Caco-2 (cell line): ENCODE measurements at regions of chr2 and their contacts with region 1.

Region 1: DNA sequence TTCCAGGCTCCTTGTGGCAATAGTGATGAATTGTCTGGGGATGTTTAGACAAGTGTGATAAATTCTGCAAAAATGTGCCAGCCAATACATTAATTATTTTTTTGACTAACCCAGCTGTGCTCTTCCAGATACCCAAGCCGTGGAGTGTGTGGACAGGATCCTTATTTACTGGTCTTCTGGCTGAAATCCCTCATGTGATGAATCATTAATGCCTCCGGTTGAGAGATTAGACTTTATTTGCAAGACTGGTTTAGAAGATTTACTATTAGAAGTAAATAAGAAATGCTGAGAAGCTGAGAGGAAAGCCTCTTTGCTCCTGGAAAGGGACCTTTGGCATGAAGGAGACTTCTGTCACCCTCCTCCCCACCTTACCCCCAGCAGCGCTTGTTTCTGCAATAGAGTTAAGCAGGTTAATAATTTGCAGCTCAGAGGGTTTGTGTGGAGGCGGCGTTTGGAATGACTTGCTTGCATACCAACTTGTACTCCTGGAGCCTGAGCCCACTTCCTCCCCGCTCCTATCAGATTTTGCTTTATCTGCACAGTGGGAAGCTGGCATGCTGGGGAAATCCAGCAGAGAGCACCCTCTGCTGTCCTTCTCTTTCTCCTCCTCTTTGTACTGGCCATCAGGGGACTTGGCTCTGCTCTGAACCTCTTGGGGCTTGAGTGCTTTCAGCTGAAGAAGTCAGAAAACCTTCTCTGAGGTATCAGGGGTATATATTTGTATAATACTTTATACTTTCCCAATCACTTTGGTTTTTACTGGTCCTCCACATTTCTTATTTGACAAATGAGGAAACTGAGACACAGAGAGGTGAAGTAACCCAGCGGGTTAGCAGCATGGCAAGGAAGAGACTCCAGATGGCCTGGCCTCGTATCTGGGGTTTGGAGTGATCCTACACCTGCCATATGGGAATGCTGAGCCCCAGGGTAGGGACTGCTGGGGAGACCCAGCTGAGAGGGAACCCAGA is 16.3 kb downstream of the SLC3A1 start:
- DNase-seq: peak; percentile 92 to 97
- H3K4me3 ChIP-seq: 0 out of 2 replicates have a peak overlapping the region, but pooled peaks have one; percentile 5
- H3K4me3 Mint-ChIP-seq: peak overlapping the region; percentile 55
- H3K27ac Mint-ChIP-seq: peak overlapping the region; percentile 62
- H3K4me1 ChIP-seq: peaks cover 52% of the 10 kb centered on the region
- H3K4me1 Mint-ChIP-seq: peaks cover 45% of the 10 kb centered on the region
- H3K27me3 ChIP-seq: no peaks in the 10 kb centered on the region
- H3K27me3 Mint-ChIP-seq: no peaks in the 10 kb centered on the region
- CTCF ChIP-seq: peak; percentile 78 to 87

Region 2: DNA sequence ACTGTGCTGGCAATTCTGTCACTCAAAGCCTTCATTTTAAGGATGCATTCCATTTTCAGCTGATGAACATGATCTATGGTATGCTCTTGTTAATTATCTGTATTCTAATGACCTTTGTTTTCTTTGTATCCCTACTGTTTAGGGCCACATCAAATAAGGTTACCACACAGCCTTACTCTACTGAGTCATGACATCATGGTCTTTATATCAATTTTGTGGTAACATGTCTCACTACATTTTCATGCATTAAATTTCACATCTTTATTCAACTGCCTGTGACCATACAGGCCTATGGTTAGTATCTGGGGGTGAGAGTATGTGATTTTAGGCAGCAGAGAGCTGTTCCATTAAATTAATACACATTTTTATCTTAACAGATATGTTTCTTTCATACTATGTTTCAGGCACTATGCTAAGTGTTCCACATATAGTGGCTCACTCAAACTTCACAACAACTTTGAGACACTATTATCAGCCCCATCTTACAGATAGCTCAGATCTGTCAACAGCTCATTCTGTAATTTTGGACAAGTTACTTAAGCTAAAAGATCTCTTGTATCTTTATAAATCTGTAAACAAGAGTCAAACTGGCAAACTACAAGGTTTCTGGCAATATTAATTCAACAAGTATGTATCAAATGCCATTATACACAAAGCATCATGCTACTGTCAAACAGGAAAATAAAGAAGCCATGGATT is 313.7 kb before region 1 on chr2:
- CTCF ChIA-PET with region 1: no interaction called
- POLR2A ChIA-PET with region 1: no interaction called
- intact Hi-C with region 1: no loop called
- DNase-seq: no peak
- H3K4me3 ChIP-seq: no peak overlapping the region
- H3K4me3 Mint-ChIP-seq: no peak overlapping the region
- H3K27ac Mint-ChIP-seq: no peak overlapping the region
- H3K4me1 ChIP-seq: peaks cover 3% of the 10 kb centered on the region; the same call in 1 of the 2 replicates
- H3K4me1 Mint-ChIP-seq: no peaks in the 10 kb centered on the region
- H3K27me3 ChIP-seq: no peaks in the 10 kb centered on the region
- H3K27me3 Mint-ChIP-seq: no peaks in the 10 kb centered on the region
- CTCF ChIP-seq: no peak

Region 3: GRCh38 chr2:44087036-44087713 is 204.4 kb before region 1 on chr2:
- CTCF ChIA-PET with region 1: interaction called, 7 read pairs
- POLR2A ChIA-PET with region 1: no interaction called
- intact Hi-C with region 1: loop called (anchors 1 kb)
- DNase-seq: peak; percentile 83 to 93
- H3K4me3 ChIP-seq: peak overlapping the region; percentile 32
- H3K4me3 Mint-ChIP-seq: peak overlapping the region; percentile 73
- H3K27ac Mint-ChIP-seq: peak overlapping the region; percentile 80
- H3K4me1 ChIP-seq: peaks cover 30% of the 10 kb centered on the region
- H3K4me1 Mint-ChIP-seq: peaks cover 49% of the 10 kb centered on the region
- H3K27me3 ChIP-seq: no peaks in the 10 kb centered on the region
- H3K27me3 Mint-ChIP-seq: no peaks in the 10 kb centered on the region
- CTCF ChIP-seq: peak; percentile 94 to 96

Region 4: DNA sequence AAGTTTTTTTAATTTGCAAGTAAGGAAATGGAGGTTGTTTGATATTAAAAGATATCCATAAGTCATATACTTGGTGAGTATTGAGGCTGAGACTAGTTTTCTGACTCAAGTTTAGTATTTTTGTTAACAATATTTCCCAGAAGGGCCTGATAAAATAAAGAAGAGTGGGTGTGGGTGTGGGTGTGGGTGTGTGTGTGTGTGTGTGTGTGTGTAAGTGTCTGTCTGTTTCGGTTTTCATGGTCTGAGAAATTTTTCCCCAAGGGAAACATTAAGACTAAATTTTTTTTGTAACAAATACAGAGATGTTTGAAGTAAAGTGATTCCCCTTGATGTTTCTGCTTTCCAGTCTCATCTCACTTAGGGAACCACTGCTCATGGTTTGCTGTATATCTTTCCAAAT is 86.4 kb before region 1 on chr2:
- CTCF ChIA-PET with region 1: no interaction called
- POLR2A ChIA-PET with region 1: no interaction called
- intact Hi-C with region 1: no loop called
- DNase-seq: no peak
- H3K4me3 ChIP-seq: no peak overlapping the region
- H3K4me3 Mint-ChIP-seq: no peak overlapping the region
- H3K27ac Mint-ChIP-seq: no peak overlapping the region
- H3K4me1 ChIP-seq: no peaks in the 10 kb centered on the region
- H3K4me1 Mint-ChIP-seq: no peaks in the 10 kb centered on the region
- H3K27me3 ChIP-seq: no peaks in the 10 kb centered on the region
- H3K27me3 Mint-ChIP-seq: no peaks in the 10 kb centered on the region
- CTCF ChIP-seq: no peak

Region 5: DNA sequence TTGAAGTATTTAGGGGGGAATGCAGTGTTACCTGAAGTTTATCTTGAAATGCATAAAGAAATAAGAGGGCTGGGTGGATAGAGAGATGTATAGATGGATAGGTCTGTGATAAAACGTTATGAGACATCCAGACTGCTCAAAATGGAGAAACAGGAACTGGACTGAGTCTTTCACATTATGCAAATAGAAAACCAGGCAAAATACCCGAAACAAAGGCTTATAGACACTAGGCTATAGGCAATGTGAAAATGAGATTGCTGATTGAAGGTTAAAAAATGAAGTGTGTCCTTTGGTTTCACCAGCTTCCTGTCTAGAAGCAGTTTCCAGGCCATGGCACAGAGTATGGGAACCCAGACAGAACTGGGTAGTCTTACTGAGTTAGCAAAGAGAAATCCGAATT is 41.2 kb before region 1 on chr2:
- CTCF ChIA-PET with region 1: interaction called, 53 read pairs
- POLR2A ChIA-PET with region 1: no interaction called
- intact Hi-C with region 1: no loop called
- DNase-seq: no peak
- H3K4me3 ChIP-seq: no peak overlapping the region
- H3K4me3 Mint-ChIP-seq: no peak overlapping the region
- H3K27ac Mint-ChIP-seq: no peak overlapping the region
- H3K4me1 ChIP-seq: peaks cover 28% of the 10 kb centered on the region
- H3K4me1 Mint-ChIP-seq: peaks cover 20% of the 10 kb centered on the region
- H3K27me3 ChIP-seq: no peaks in the 10 kb centered on the region
- H3K27me3 Mint-ChIP-seq: no peaks in the 10 kb centered on the region
- CTCF ChIP-seq: no peak

Region 6: DNA sequence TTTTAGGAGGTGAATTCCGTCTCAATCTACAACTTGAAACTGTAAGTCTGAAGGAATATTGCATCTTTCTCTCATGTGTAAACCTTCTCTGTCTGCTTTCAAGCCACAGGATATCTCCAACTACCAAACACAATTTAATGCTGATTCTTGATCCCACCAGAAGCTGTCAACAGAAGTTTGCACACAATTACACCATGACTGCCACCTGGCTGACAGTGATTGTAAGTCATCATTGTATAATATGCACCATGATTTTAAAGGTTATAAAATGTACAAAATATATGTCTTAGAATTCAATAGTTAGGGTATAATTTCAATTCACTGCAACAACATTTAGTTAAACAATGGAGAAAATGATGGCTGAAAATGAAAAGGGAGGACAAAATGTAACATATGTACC is 51.3 kb after region 1 on chr2:
- CTCF ChIA-PET with region 1: interaction called, 9 read pairs
- POLR2A ChIA-PET with region 1: no interaction called
- intact Hi-C with region 1: loop called (anchors 1 kb)
- DNase-seq: peak in 1 of 2 experiments; percentile 43
- H3K4me3 ChIP-seq: no peak overlapping the region
- H3K4me3 Mint-ChIP-seq: no peak overlapping the region
- H3K27ac Mint-ChIP-seq: no peak overlapping the region
- H3K4me1 ChIP-seq: no peaks in the 10 kb centered on the region
- H3K4me1 Mint-ChIP-seq: no peaks in the 10 kb centered on the region
- H3K27me3 ChIP-seq: no peaks in the 10 kb centered on the region
- H3K27me3 Mint-ChIP-seq: no peaks in the 10 kb centered on the region
- CTCF ChIP-seq: peak; percentile 46 to 47